PC-9 (cell line): ENCODE measurements at regions of chr3 and their contacts with region 1.

Region 1: DNA sequence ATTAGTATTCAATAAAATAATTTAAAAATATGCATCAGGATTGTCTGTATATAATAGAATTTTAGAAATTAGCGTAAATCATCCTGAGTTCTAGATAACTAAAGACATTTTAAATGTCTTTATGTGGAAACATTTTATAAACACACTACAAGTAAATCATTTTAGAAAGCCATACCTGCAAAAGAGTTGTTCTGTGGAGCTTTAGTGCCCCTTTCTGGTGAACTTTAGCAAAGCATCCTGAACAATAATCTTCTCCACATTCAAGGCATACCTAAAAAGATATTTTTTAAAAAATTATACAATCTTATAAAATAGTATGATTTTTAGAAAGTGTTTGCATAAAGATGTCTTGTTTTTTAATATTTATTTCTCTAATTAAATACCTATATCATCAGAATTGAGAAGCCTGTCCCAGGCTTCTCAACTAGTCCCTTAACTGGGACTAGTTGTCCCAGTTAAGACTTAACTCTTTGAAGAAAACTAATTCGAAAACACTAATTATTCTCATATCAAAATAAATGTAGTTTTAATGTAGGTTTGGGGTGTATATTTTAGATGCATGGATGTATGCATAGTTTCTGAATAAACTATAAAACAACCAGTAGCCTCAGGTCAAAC is 29.7 kb downstream of the ZBBX start:
- DNase-seq: peak in 1 of 2 experiments; percentile 18
- H3K4me3 ChIP-seq: no peak overlapping the region
- H3K27ac ChIP-seq: no peak overlapping the region
- H3K4me1 ChIP-seq: no peaks in the 10 kb centered on the region
- H3K27me3 ChIP-seq: no peaks in the 10 kb centered on the region
- CTCF ChIP-seq: peak; percentile 66

Region 2: DNA sequence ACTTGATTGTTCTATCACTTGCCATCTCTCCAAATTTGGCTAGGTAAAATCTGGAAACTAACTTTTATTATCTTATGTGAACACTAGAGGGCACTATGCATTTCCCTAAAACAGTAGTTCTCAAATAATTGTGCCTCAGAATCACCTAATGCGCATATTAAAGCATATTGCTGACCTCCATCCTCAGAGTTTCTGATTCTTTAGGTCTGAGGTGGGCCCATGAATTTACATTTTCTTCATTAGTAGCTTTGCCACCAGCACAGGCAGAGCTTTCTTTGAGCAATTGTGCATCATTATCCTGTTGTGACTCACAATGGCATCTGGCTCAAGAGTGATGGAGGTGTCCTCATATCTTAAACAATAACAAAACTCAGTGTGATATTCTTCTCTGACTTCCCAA is 1495.7 kb before region 1 on chr3:
- CTCF ChIA-PET with region 1: no interaction called
- POLR2A ChIA-PET with region 1: no interaction called
- intact Hi-C with region 1: loop called (anchors 10 kb)
- DNase-seq: peak; percentile 3 to 42
- H3K4me3 ChIP-seq: no peak overlapping the region
- H3K27ac ChIP-seq: no peak overlapping the region
- H3K4me1 ChIP-seq: no peaks in the 10 kb centered on the region
- H3K27me3 ChIP-seq: no peaks in the 10 kb centered on the region
- CTCF ChIP-seq: peak; percentile 86

Region 3: GRCh38 chr3:165885558-165886270 is 1464.6 kb before region 1 on chr3:
- CTCF ChIA-PET with region 1: no interaction called
- POLR2A ChIA-PET with region 1: interaction called, 12 read pairs
- intact Hi-C with region 1: no loop called
- DNase-seq: no peak
- H3K4me3 ChIP-seq: no peak overlapping the region
- H3K27ac ChIP-seq: no peak overlapping the region
- H3K4me1 ChIP-seq: no peaks in the 10 kb centered on the region
- H3K27me3 ChIP-seq: no peaks in the 10 kb centered on the region
- CTCF ChIP-seq: no peak

Region 4: DNA sequence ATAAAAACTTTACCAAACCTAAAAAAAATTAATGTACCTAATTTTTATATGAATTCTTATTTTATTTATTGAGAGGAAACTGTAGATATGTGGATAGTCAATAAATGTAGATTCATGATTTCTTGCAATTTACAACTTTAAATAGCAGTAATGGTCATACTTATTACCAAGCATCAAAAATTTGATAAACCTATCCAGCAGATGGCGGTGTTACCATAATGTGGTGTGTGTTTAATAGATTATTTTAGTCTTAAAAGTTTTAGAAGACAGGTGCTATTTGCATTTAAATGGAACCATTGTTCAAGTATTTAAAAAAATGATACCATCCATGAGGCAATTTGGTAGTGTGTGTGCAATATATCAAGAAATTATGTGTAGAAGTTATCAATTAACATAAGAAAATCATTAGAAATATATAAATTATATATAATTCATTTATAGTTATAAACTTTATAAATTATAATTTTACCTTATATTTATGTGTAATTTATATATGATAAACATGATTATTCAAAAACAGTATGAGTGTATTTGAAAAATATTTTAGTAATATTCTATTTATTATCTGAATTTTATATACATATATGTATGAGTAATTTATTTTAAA is 1337.2 kb before region 1 on chr3:
- CTCF ChIA-PET with region 1: no interaction called
- POLR2A ChIA-PET with region 1: no interaction called
- intact Hi-C with region 1: loop called (anchors 5 kb)
- DNase-seq: peak in 1 of 2 experiments; percentile 11
- H3K4me3 ChIP-seq: no peak overlapping the region
- H3K27ac ChIP-seq: no peak overlapping the region
- H3K4me1 ChIP-seq: no peaks in the 10 kb centered on the region
- H3K27me3 ChIP-seq: no peaks in the 10 kb centered on the region
- CTCF ChIP-seq: peak; percentile 82

Region 5: GRCh38 chr3:167001374-167001773 is 349.0 kb before region 1 on chr3:
- CTCF ChIA-PET with region 1: no interaction called
- POLR2A ChIA-PET with region 1: no interaction called
- intact Hi-C with region 1: no loop called
- DNase-seq: no peak
- H3K4me3 ChIP-seq: no peak overlapping the region
- H3K27ac ChIP-seq: no peak overlapping the region
- H3K4me1 ChIP-seq: no peaks in the 10 kb centered on the region
- H3K27me3 ChIP-seq: no peaks in the 10 kb centered on the region
- CTCF ChIP-seq: no peak

Region 6: DNA sequence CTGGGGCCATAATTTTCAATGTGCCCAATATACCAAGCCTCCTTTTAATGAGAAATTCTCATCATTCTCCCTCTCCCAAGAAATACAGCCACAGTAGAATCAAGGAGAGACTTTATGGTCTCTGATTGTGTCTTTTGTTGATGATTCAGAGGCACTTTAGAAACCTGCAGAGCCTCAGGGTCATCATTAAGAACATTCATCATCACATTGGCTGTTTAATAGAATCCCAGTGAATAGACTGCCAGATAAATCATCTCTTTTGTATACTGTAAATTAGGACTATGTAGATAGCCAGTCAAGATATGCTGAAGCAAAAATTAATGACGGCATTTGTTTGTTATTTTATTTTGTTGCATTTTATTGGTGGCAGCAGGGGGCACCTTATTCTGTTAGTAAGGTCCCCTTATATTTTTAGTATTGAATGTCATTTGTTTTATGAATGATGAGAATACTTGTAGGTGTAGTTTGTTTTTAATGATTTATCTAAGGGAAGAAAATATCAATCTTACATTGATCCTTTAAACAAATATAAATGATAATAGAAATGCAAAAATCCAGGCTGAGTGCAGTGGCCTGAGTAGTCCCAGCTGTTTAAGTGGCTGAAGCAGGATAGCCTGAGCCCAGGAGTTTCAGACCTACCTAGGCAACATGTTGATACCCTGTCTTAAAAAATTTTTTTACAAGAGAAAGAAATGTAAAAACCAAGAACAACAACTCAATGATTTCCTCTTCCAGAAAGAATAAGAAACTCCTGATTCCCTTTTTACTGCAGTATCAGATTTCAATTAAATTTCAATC is 109.1 kb before region 1 on chr3:
- CTCF ChIA-PET with region 1: no interaction called
- POLR2A ChIA-PET with region 1: no interaction called
- intact Hi-C with region 1: no loop called
- DNase-seq: no peak
- H3K4me3 ChIP-seq: no peak overlapping the region
- H3K27ac ChIP-seq: no peak overlapping the region
- H3K4me1 ChIP-seq: no peaks in the 10 kb centered on the region
- H3K27me3 ChIP-seq: no peaks in the 10 kb centered on the region
- CTCF ChIP-seq: no peak